Cardiac septum (tissue), 1 donor: ENCODE measurements at regions of chr1 and their contacts with region 1.

Region 1: DNA sequence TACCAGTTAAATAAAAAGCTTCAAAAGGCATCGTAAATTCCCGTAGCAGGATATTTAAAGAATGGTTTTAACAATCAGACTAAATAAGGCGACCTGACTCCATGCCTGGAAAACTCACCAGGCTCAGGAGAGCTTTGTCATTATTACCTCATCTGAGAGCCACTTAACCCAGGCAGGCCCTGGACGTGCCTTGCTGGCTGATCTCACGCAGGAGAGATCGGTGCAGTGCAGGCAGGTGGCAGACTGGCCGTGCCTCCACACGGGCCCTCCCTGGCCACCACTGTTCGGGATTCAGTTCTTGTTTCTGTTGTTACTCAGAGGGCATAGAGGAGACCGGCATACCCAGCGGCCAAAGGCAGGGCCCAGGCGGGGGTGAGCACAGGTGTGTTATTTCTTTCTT is 6.4 kb downstream of the MT1HL1 start:
- DNase-seq: peak; percentile 84

Region 2: DNA sequence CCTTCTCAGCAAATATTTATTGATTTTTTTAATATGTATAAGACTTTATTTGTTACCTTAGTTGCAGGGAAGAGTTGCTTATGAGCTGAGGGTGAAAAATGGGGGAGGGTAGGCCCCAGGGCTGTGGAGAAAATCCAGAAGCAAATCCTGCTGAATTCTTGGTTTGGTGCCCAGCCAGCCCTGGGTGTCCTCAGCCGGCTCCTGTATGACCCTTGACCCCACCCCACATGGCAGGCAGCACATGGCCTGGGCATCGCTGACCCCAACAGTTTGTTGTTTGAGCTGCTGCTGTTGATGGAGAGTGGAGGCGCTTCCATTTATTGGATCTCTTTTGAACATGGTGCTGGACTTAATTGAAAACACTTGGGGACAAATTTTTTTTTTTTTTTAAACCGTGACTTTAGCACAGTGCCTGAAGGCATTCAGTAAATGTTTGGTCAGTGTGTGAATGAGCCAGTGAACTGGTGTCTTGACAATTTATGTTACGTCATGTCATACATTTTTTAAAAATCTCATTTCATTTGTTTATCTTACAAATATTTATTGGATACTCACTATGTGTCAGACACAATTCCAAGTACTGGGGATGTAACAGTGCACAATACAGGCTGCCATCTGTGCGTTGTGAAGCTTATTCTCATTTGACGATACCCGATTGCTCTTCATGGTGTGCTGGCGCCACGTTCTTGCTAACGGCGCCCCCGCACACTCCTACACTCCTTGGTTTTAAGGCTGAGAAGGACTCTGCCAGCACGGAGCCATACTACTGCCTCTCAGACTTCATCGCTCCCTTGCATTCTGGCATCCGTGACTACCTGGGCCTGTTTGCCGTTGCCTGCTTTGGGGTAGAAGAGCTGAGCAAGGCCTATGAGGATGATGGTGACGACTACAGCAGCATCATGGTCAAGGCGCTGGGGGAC is 104.0 kb before region 1 on chr1:
- intact Hi-C with region 1: loop called (anchors 5 kb)
- DNase-seq: no peak

Region 3: GRCh38 chr1:237012788-237013383 is 15.0 kb after region 1 on chr1:
- intact Hi-C with region 1: loop called (anchors 1 kb)
- DNase-seq: no peak